Activated naive CD4-positive, alpha-beta T cell treated with anti-CD3 and anti-CD28 coated beads, Interleukin-2, amount 10 ng/mL, durations not matched to agents 7 days and 5 days (primary cell): ENCODE measurements at regions of chr17 and their contacts with region 1.

Region 1: DNA sequence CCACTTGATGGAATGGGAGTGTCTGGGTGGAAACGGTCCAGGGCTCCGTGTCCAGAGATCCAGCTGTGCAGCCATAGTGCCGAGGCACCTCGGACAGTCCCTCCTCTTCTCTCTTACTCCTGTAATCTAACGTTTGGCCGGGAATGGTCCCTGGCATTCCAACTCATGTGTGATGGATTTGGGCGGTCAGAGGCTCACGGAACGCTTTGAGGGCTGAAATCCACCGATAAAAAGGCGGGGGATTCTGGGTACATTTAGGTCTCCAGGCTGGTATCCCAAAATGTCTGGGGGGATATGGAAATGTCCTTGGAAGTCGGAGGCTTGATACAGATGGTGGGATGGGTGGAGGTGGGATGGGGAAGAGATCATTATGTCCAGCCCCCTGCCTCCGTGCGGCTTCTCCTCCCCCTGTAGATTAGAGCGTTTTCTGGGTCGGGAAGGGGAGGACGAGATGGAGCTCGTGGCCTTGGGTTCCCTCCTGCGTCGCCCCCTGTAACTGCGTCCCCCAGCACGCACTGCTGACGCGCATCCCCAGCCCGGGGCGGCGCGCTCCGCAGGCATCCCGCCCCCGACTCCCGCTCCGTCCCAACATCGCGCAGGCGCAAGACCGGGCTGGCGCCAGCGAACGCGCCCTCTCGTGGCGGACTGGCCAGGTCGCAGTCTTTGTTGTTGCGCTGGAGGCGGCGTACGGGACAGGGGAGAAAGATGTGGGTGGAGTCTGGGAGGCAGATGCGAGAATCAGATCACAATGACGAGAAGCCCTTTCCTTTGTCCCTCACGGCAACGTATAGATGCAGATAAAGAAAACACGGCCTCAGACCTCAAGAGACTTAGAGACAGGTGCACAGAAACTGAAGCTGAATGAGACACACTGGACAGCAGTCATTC is 4.5 kb upstream of the SGCA start:
- DNase-seq: peak; percentile 95
- H3K4me3 Mint-ChIP-seq: peak overlapping the region; percentile 67
- H3K27ac Mint-ChIP-seq: peak overlapping the region; percentile 83
- H3K4me1 Mint-ChIP-seq: peaks cover 48% of the 10 kb centered on the region
- H3K27me3 Mint-ChIP-seq: peaks cover 24% of the 10 kb centered on the region

Region 2: DNA sequence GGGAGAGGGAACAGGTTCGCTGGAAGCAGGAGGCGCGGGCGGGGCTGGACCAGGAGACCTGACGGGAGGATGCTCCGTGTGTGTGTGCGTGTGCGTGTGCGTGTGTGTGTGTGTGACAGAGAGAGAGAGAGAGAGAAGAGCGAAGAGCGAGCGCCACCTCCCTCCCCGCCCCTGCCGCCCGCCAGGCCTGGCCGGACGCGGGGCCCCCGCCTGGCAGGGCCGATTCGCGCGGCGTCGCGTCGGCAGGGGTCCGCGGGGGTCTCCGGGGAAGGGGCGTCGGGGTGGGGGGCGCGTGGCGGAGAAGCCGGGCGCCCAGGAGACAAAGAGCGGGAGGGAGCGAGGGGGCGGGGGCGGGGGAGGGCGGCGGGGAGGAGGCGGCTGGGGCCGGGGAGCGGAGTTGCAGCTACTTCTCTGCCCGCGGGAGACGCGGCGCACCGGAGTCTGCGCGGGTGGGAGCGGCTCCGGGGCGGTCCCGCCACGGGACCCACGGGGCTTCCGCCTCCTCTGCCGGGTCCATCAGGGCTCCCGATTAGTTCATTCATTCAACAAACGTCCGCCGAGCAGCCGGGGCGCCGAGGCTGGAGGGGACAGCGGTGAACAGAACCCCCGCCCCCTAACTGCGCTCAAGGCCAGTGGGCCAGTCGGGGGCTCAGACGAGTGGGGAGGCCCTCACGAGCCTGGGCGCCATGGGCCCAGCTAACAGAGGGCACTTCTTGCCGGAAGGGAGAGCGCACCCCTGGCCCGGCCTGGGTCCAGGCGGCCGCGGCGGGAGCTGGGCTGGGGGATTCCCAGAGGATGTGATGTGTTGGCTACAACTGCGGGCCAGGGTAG is 31.3 kb before region 1 on chr17 and contains the start of gene SAMD14:
- CTCF ChIA-PET with region 1: interaction called, 10 read pairs
- DNase-seq: peak; percentile 70
- H3K4me3 Mint-ChIP-seq: peak within 1 kb of the TSS; percentile 58
- H3K27ac Mint-ChIP-seq: peak within 1 kb of the TSS; percentile 33
- H3K4me1 Mint-ChIP-seq: peaks cover 37% of the 10 kb centered on the region
- H3K27me3 Mint-ChIP-seq: peaks cover 65% of the 10 kb centered on the region

Region 3: DNA sequence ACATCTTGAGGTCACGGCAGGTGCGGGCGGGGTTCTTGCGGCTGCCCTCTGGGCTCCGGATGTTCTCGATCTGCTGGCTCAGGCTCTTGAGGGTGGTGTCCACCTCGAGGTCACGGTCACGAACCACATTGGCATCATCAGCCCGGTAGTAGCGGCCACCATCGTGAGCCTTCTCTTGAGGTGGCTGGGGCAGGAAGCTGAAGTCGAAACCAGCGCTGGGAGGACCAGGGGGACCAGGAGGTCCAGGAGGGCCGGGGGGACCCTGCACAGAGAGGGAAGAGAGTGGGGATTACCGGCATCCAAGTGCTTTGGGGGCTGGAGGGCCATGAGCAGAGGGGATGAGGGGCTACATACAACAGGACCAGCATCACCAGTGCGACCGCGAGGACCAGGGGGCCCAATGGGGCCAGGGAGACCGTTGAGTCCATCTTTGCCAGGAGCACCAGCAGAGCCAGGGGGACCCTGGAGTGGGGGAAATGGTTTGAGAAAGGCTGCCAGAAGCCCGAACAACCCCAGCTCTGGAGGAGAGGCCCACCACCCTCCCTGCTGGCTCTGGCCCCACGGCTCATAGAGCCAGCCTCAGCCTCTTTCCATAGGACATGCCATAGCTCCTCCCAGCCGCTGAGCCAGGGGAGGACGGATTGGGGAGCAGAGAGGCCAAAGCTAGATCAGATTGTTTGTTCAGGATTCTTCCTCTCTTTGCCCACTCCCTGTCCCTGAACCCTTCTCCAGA is 25.6 kb after region 1 on chr17:
- CTCF ChIA-PET with region 1: no interaction called
- DNase-seq: no peak
- H3K4me3 Mint-ChIP-seq: no peak overlapping the region
- H3K27ac Mint-ChIP-seq: peak overlapping the region; percentile 28
- H3K4me1 Mint-ChIP-seq: peaks cover 25% of the 10 kb centered on the region
- H3K27me3 Mint-ChIP-seq: peaks cover 70% of the 10 kb centered on the region

Region 4: GRCh38 chr17:50272711-50273653 is 111.7 kb after region 1 on chr17:
- CTCF ChIA-PET with region 1: no interaction called
- DNase-seq: peak; percentile 71
- H3K4me3 Mint-ChIP-seq: peak overlapping the region; percentile 51
- H3K27ac Mint-ChIP-seq: no peak overlapping the region
- H3K4me1 Mint-ChIP-seq: peaks cover 14% of the 10 kb centered on the region
- H3K27me3 Mint-ChIP-seq: peaks cover 70% of the 10 kb centered on the region

Region 5: GRCh38 chr17:50668025-50668837 is 507.0 kb after region 1 on chr17:
- CTCF ChIA-PET with region 1: no interaction called
- DNase-seq: peak; percentile 8
- H3K4me3 Mint-ChIP-seq: no peak overlapping the region
- H3K27ac Mint-ChIP-seq: no peak overlapping the region
- H3K4me1 Mint-ChIP-seq: no peaks in the 10 kb centered on the region
- H3K27me3 Mint-ChIP-seq: peaks cover 38% of the 10 kb centered on the region